ENCODE measurements at regions of chr19 and their contacts with region 1.

Region 1: DNA sequence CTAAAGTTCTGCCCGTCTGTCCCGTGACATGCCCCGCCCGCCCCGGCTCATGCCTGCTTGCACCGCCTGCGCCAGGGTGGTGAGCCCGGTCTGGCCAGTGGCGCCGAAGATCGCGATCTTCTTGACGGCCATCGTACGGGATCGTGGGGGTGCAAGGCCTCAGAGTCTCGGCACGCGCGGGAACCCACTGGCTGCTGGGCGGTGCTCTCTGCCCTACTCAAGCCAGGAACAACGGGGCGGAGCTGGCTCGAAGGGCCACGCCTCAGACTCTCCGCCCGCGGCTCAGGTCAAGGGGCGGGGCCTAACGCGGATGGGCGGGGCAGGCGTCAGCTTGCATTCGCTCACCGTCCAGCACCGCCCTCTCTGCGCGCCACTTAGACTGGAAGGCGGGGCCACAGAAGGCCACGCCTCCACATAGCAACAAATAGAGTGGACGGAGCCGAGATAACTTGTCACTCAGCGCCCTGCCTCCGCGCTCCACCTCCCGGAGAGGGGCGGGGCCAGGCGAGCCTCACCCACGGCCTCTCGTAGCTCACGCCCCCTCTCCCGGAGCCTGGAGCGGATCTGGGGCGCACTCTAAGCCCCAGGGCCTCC is at the start of gene BLVRB:
- DNase-seq: peak; percentile 99
- ATAC-seq: peak; percentile 89
- H3K4me3 Mint-ChIP-seq: peak within 1 kb of the TSS; percentile 81
- H3K27ac Mint-ChIP-seq: peak within 1 kb of the TSS; percentile 68
- H3K4me1 Mint-ChIP-seq: peaks cover 36% of the 10 kb centered on the region
- H3K27me3 Mint-ChIP-seq: peaks cover 14% of the 10 kb centered on the region
- CTCF ChIP-seq: no peak
- total RNA-seq, gene BLVRB: 12.3 and 14.6 TPM in 2 replicates

Region 2: DNA sequence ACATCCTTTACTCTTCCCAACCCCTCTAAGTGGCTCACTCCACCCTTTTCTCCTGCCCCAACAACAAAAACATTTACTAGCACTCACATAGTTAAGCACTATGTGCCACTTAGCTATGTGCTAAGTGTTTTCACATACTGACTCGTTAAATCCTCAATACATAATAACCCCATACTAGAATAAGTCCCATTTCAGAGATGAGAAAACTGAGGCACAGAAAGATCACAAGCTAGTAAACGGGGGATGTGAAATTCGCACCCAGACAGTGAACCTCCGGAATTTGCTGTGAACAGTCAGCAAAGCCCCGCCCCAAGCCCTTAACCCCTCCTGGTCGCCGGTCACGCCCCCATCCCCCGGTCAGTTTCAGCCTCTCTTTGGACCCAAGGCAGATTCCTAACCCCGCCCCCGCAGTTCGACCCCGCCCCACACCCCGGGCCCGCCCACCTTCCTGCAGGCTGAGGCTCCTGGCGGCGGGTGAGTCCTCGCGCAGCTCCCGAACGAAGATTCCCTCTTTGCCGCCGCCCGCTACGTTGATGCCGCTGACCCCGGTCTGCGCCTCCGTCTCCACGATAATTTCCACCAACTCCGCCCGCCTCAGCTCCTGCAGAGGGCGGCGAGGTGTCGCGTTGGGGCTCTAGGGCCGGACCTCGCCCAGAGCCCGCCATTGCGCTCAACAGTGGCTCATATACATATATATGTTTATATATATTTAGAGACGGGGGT is 62.2 kb before region 1 on chr19:
- CTCF ChIA-PET with region 1: no interaction called
- POLR2A ChIA-PET with region 1: interaction called, 5 read pairs
- intact Hi-C with region 1: loop called (anchors 1 kb)
- DNase-seq: peak; percentile 86
- ATAC-seq: peak; percentile 81
- H3K4me3 Mint-ChIP-seq: peak overlapping the region; percentile 90
- H3K27ac Mint-ChIP-seq: peak overlapping the region; percentile 71
- H3K4me1 Mint-ChIP-seq: peaks cover 23% of the 10 kb centered on the region
- H3K27me3 Mint-ChIP-seq: peaks cover 3% of the 10 kb centered on the region
- CTCF ChIP-seq: no peak

Region 3: GRCh38 chr19:40529093-40529954 is 63.7 kb after region 1 on chr19:
- CTCF ChIA-PET with region 1: no interaction called
- POLR2A ChIA-PET with region 1: no interaction called
- intact Hi-C with region 1: loop called (anchors 2 kb)
- DNase-seq: peak; percentile 91
- ATAC-seq: peak; percentile 91
- H3K4me3 Mint-ChIP-seq: peak overlapping the region; percentile 42
- H3K27ac Mint-ChIP-seq: no peak overlapping the region
- H3K4me1 Mint-ChIP-seq: peaks cover 18% of the 10 kb centered on the region
- H3K27me3 Mint-ChIP-seq: peaks cover 33% of the 10 kb centered on the region
- CTCF ChIP-seq: no peak

Region 4: DNA sequence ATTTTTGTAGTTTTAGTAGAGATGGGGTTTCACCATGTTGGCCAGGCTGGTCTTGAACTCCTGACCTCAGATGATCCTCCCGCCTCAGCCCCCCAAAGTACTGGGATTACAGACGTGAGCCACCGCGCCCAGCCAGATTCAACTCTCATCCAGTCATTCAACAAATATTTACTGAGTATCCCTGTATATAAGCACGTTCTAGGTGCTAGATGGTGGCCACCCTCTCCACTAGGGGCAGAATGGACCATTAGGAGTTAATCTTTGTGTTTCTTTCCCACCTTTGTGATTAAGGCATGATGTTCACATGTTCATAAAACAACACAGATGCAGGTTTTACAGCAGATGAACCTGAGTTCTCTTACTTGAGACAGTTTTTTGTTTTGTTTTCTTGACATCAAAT is 118.4 kb after region 1 on chr19:
- CTCF ChIA-PET with region 1: no interaction called
- POLR2A ChIA-PET with region 1: no interaction called
- intact Hi-C with region 1: no loop called
- DNase-seq: no peak
- ATAC-seq: no peak
- H3K4me3 Mint-ChIP-seq: no peak overlapping the region
- H3K27ac Mint-ChIP-seq: no peak overlapping the region
- H3K4me1 Mint-ChIP-seq: peaks cover 22% of the 10 kb centered on the region
- H3K27me3 Mint-ChIP-seq: no peaks in the 10 kb centered on the region
- CTCF ChIP-seq: no peak